HAP-1 (cell line): ENCODE measurements at regions of chr22 and their contacts with region 1.

Region 1: GRCh38 chr22:22976033-22976922 is 88.7 kb downstream of the IGLL5 start:
- DNase-seq: no peak
- H3K4me3 ChIP-seq: no peak overlapping the region
- H3K4me1 ChIP-seq: no peaks in the 10 kb centered on the region
- H3K27me3 ChIP-seq: 0 out of 2 replicates have a peak, but pooled peaks cover 2% of the 10 kb centered on the region

Region 2: GRCh38 chr22:22913989-22914388 is 62.3 kb before region 1 on chr22:
- in situ Hi-C with region 1: loop called (anchors 10 kb)
- DNase-seq: no peak
- H3K4me3 ChIP-seq: no peak overlapping the region
- H3K4me1 ChIP-seq: no peaks in the 10 kb centered on the region
- H3K27me3 ChIP-seq: peaks cover 11% of the 10 kb centered on the region; the same call in 1 of the 2 replicates